Posterior vena cava (tissue), 2 donors: ENCODE measurements at regions of chr10 and their contacts with region 1.

Region 1: DNA sequence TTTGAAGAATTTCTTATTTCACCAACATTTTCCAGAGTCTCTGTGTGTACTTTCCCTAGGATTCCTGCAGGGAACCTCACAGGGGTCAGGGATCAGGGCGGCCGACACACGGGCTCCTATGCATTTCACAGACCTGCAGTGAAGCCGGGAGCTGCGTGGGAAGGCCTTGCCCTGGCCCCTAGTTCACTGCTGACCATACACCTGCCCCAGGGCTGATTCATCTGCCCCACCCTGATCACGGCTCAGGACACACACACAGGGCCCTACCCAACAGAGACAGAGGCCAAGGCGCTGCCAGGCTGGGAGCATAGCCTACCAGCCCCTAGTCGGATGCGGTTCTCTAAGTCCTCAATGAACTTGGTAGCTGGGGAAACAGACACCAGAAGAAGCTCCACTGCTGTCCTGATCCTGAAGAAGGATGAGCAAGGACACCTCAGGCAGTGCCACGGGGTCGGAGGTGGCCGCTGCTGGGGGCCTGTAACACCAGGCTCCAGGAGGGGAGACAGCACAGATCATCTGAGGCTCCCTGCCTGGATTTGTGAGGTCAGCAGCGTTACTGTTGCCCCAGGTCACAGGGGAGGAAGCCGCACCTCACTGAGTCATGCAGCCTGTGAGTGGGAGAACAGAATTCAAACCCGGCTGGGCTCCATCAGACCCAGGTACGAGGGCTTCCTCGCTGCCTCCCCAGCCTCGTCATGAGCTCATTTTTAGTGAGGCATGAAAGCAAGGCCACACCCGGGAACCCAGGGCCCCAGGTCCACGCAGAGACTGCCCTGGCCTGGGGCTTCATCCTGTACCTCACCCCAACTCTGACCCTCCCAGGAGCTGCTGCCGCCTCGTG is 278.8 kb upstream of the PPP2R2D start:
- DNase-seq: peak; percentile 63

Region 2: GRCh38 chr10:129678186-129678585 is 1943.8 kb before region 1 on chr10:
- intact Hi-C with region 1: loop called in 1 of 2 experiments (anchors 5 kb)
- DNase-seq: no peak

Region 3: DNA sequence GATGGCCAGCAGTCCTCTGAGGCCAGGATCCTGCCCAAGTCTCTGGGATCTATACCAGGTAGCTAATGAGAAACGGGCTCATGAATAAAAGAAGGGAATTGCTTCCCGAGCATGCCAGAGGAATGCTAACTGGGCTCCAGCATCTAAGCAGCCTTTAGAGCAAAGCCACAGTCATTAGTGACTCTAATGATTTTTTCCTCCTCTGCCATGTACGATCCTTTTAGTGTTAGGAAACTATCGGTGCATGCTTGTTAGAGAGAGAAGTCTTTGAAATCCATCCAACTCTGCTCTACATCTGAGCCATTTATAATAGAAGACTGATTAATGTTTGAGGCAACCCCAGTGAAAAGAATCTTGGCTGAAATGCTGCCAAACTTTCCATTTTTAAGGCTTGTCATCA is 185.5 kb before region 1 on chr10:
- intact Hi-C with region 1: no loop called
- DNase-seq: no peak

Region 4: GRCh38 chr10:131663351-131663750 is 41.3 kb after region 1 on chr10:
- intact Hi-C with region 1: no loop called
- DNase-seq: peak; percentile 64